Activated B cell treated with CpG ODN at 0.5 μM for 24 hours (primary cell): ENCODE measurements at regions of chr15 and their contacts with region 1.

Region 1: DNA sequence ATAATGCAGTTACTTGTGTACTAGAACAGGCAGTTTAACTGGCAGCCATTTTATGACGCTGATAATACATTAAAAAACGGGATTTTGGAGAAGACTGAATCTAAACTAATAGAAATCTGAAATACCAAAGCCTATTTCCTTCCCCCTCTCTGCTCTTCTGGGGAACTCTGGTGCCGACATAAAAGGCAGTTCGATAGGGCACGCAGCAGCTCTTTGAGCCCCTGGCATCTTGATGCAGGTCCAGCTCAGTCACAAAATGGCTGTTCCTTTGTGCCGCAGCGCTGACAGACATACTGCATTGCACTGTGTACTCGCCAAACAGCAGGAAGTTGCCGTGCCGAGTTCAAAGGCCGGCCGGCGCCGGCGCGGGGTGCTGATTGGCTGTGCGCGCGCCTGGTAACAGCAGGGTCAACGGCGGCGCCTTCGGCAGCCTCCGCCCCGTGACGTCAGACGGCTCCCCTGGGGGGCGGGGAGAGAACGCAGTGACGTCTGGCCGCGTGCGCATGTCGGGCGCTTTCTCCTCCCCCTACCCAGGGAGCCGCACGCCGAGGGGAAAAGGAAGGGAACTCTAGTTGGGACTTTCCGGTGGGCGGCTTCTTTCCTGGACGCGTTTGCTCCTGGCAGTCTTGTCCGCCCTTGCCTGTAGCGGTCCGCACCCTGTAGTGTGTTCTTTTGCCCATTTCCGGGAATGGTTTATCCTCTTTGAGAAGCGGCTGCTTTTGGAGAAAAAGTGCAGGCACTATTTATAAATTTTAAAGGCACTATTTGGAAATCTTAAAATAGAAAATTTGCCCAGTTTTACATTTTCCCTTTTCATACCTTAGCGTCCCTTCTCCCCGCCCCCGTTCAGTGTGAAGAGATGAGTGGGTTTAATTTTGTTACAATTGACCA is 4.1 kb downstream of the CHD2 start:
- DNase-seq: peak; percentile 99
- ATAC-seq: peak; percentile 81
- H3K4me3 Mint-ChIP-seq: peak overlapping the region; percentile 97
- H3K27ac Mint-ChIP-seq: peak overlapping the region; percentile 100
- H3K4me1 Mint-ChIP-seq: peaks cover 73% of the 10 kb centered on the region
- H3K27me3 Mint-ChIP-seq: no peaks in the 10 kb centered on the region
- CTCF ChIP-seq: no peak

Region 2: DNA sequence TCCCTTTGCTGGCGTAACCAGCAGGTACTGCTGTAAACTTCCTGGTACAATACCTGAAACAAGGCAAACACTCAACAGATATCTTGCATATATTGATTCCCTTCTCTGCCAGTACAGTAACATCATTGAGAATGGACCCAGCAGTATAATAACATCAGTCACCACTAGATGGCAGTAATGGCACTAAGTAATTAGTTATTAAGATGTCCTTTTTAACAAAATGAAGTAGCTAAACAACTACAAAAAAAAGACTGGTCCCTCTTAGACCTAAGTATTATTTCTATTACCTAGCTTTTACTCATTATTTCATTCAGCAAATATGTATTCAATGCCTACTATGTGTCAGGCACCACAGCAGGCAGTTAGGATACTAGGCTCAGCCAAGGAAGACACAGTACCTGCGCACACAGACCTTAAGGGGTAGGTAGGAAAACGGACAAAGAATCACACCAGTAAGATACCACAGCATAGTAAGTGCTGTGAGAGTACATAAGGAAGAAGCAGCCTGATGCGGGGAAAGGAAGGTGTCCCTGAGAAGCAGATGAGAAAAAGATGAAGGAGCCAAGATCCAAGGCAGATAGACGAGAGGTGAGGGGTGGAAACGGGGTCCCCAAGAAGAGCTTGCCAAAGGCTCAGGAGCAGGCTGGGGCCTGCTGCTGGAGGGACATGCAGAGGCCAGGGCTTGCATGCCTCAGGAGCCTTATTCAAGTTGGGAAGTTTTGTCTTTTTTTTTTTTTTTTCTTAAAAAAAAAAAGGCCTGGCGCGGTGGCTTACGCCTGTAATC is 106.8 kb before region 1 on chr15:
- CTCF ChIA-PET with region 1: interaction called, 9 read pairs
- POLR2A ChIA-PET with region 1: interaction called, 26 read pairs
- intact Hi-C with region 1: no loop called
- DNase-seq: no peak
- ATAC-seq: peak; percentile 84
- H3K4me3 Mint-ChIP-seq: no peak overlapping the region
- H3K27ac Mint-ChIP-seq: peak overlapping the region; percentile 68
- H3K4me1 Mint-ChIP-seq: peaks cover 6% of the 10 kb centered on the region
- H3K27me3 Mint-ChIP-seq: no peaks in the 10 kb centered on the region
- CTCF ChIP-seq: peak; percentile 22

Region 3: GRCh38 chr15:92820236-92821021 is 83.8 kb before region 1 on chr15:
- CTCF ChIA-PET with region 1: no interaction called
- POLR2A ChIA-PET with region 1: interaction called, 22 read pairs
- intact Hi-C with region 1: loop called (anchors 1 kb)
- DNase-seq: peak; percentile 82
- ATAC-seq: peak; percentile 79
- H3K4me3 Mint-ChIP-seq: peak overlapping the region; percentile 90
- H3K27ac Mint-ChIP-seq: peak overlapping the region; percentile 90
- H3K4me1 Mint-ChIP-seq: peaks cover 62% of the 10 kb centered on the region
- H3K27me3 Mint-ChIP-seq: no peaks in the 10 kb centered on the region
- CTCF ChIP-seq: no peak

Region 4: DNA sequence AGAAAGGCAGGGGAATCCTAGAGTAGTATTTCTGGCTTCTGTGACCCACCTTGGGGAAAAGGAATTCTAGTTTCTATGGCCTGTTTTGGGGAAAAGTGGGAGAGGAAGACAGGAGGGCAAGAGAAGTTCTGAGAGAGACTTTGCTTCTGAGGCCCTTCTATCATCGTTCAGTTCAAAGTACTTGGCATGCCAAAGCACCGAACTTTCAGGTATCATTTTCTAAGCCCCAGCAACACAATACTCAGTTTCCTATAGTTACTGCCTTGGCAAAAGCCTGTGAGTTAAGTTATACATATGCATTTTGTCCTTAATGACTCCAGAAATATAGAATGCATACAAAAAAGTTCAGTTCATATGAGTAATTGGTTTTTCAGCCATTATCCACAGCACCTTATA is 78.2 kb before region 1 on chr15:
- CTCF ChIA-PET with region 1: no interaction called
- POLR2A ChIA-PET with region 1: interaction called, 144 read pairs
- intact Hi-C with region 1: loop called (anchors 1 kb)
- DNase-seq: no peak
- ATAC-seq: no peak
- H3K4me3 Mint-ChIP-seq: no peak overlapping the region
- H3K27ac Mint-ChIP-seq: peak overlapping the region; percentile 0
- H3K4me1 Mint-ChIP-seq: peaks cover 62% of the 10 kb centered on the region
- H3K27me3 Mint-ChIP-seq: no peaks in the 10 kb centered on the region
- CTCF ChIP-seq: no peak

Region 5: DNA sequence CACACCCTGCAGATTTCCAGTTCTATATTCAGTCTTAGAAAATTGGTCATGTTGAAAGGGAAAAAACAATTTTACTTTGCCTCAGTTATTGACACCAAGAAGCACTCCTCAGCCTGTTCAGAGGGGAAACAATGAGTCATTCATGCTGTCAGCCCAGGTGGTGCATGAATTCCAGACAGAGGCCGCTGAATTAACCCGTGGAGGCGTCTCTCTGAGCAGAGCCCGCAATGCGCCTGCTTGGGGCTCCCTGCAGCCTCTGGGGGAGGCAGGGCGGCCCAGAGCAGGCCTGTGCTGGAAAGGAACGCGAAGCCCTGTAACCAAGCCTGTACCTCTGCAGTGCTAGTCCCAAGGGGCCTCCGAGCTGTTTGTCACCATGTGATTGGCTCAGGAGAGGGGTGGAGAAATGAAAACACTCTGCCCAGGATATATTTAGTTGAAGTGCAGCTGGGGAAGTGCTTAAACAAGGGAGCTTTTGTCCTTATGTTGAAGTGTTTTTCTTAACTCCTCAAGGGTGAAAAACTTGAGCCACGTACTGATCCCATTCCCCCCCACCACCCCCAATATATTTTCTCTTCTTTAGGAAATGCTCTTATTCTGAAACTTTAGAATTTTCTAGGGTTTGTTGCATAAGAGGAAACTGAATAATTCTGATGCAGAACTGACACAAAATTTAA is 72.4 kb before region 1 on chr15:
- CTCF ChIA-PET with region 1: interaction called, 4 read pairs
- POLR2A ChIA-PET with region 1: interaction called, 144 read pairs
- intact Hi-C with region 1: loop called (anchors 1 kb)
- DNase-seq: peak; percentile 86
- ATAC-seq: peak; percentile 93
- H3K4me3 Mint-ChIP-seq: peak overlapping the region; percentile 80
- H3K27ac Mint-ChIP-seq: peak overlapping the region; percentile 96
- H3K4me1 Mint-ChIP-seq: peaks cover 58% of the 10 kb centered on the region
- H3K27me3 Mint-ChIP-seq: no peaks in the 10 kb centered on the region
- CTCF ChIP-seq: no peak

Region 6: DNA sequence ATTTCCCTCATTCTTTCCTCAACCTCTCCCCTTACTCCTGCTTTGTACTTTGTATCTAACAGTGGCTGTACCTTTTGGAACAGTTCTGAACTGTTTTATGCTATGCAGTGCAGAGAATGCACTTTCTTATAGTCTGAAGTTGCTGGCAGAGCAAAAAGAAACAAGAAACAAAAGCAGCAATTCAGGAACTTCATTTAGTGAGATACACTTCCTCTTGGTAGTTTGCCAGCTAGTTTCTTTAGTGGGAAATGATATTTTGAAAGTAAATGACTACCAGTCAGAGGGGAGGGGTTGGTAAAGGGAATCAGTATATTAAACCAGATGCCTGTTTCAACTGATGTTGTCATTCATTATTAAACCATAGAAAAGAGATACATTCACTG is 59.1 kb before region 1 on chr15:
- CTCF ChIA-PET with region 1: no interaction called
- POLR2A ChIA-PET with region 1: interaction called, 14 read pairs
- intact Hi-C with region 1: loop called (anchors 2 kb)
- DNase-seq: no peak
- ATAC-seq: peak; percentile 50
- H3K4me3 Mint-ChIP-seq: peak overlapping the region; percentile 73
- H3K27ac Mint-ChIP-seq: peak overlapping the region; percentile 95
- H3K4me1 Mint-ChIP-seq: peaks cover 71% of the 10 kb centered on the region
- H3K27me3 Mint-ChIP-seq: no peaks in the 10 kb centered on the region
- CTCF ChIP-seq: no peak

Region 7: GRCh38 chr15:92889390-92890107 is 14.6 kb before region 1 on chr15:
- CTCF ChIA-PET with region 1: interaction called, 6 read pairs
- POLR2A ChIA-PET with region 1: interaction called, 449 read pairs
- intact Hi-C with region 1: no loop called
- DNase-seq: no peak
- ATAC-seq: no peak
- H3K4me3 Mint-ChIP-seq: peak overlapping the region; percentile 13
- H3K27ac Mint-ChIP-seq: peak overlapping the region; percentile 59
- H3K4me1 Mint-ChIP-seq: peaks cover 62% of the 10 kb centered on the region
- H3K27me3 Mint-ChIP-seq: no peaks in the 10 kb centered on the region
- CTCF ChIP-seq: no peak